Pancreas (tissue), 10 donors: ENCODE measurements at regions of chr12 and their contacts with region 1.

Region 1: DNA sequence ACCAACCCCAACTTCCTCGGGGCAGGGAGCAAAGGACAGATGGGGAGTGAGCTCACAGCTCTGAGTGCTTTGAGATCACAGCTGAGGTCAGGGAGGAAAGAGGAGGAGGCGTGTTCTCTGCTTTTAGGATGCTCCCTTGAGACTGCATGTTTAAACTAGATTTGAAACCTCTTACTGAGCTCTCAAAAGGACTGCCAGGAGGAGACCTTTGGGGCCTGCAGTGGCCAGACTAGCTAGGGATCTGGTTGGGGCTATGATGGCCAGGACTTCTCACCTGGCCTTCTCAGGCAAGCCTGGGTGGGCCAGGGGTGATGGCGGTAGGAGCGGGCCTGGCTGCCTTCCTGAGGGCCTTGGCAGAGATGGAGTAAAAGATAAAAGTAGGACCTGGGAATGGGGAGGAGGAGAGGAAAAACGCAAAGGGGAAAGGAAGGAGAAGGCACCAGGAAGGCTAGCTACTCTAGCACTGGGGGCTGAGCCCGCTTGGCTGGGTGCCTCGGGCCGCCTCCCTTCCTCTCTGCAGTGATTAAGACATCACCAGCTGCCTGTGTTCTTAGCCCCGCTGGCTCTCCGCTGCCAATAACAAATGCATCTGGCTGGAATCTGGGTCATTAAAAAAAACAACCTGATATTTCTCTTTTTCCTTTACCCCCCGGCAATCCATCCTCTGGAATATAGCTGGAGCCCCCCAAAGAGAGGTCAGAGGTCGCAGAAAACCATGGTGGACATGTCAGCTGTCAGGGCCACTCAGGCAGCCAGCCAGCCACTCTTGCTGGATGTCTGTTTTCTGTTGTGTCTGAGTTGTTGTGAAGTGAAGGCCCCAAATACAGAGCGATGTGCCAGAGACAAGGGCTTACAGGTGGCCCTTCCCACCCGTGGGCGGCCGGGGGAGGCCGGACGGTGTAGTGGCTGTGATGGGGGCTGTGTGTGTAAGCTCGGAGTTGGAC is 141.3 kb downstream of the TSPAN9 start:
- DNase-seq: peak in 4 of 6 donors; percentile 38 to 78 (median 50)
- ATAC-seq: peak; percentile 70 to 81 (median 77)
- H3K4me3 ChIP-seq: no peak overlapping the region
- H3K27ac ChIP-seq: peak overlapping the region in 1 of 4 donors; percentile 37
- H3K4me1 ChIP-seq: no peaks in the 10 kb centered on the region
- H3K27me3 ChIP-seq: no peaks in the 10 kb centered on the region
- CTCF ChIP-seq: no peak

Region 2: DNA sequence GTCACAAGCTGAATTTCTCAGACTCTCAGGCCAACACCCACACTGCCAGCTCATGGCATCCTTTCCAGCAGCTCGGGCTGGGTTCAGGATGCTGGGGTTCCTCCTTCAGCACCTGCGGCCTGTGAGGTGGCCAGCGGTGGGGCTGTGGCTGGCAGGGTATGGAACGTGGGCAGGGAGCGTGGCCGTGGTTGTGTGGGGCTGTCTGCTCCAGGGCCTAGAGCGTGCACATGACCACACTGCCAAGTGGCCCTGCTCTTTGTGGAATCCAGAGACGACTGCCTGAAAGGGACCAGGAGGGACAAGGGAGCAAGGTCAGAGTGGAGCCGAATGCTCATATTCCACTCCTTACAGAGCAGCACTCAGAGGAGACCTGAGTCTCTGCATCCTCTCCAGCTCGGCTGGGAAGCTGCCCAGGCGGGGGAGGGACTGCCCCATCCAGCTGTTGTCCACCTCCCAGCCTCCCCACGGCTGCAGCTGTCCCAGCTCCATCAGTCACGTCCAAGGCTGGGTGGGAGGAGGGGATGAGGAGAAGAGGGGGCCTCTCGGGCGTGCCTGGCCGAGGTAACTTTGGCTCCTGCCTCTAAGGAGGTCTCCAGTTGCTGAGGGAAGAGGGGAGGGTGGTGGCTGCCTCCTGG is 70.0 kb before region 1 on chr12:
- intact Hi-C with region 1: loop called in 1 of 3 experiments (anchors 10 kb)
- DNase-seq: no peak
- ATAC-seq: peak in 1 of 4 donors; percentile 23
- H3K4me3 ChIP-seq: no peak overlapping the region
- H3K27ac ChIP-seq: no peak overlapping the region
- H3K4me1 ChIP-seq: peaks cover 0 to 10% (median 4%) of the 10 kb centered on the region in 3 donors
- H3K27me3 ChIP-seq: no peaks in the 10 kb centered on the region
- CTCF ChIP-seq: no peak